A549 (cell line): ENCODE measurements at regions of chr19 and their contacts with region 1.

Region 1: GRCh38 chr19:42295831-42296525 is 6.0 kb upstream of the PRR19 start:
- DNase-seq: peak; percentile 86 to 93
- ATAC-seq: peak; percentile 72 to 84
- H3K4me3 ChIP-seq: no peak overlapping the region
- H3K27ac ChIP-seq: no peak overlapping the region
- H3K4me1 ChIP-seq: peaks cover 6% of the 10 kb centered on the region
- CTCF ChIP-seq: peak; percentile 98
- EP300 ChIP-seq: no peak
- POLR2A ChIP-seq: no peak
- RAD21 ChIP-seq: peak; percentile 83 to 88

Region 2: GRCh38 chr19:42121656-42122069 is 174.3 kb before region 1 on chr19:
- CTCF ChIA-PET with region 1: interaction called, 12 read pairs
- POLR2A ChIA-PET with region 1: no interaction called
- DNase-seq: peak in 1 of 2 experiments; percentile 66
- ATAC-seq: peak; percentile 10 to 37; a peak in 3 of 6 replicates
- H3K4me3 ChIP-seq: no peak overlapping the region
- H3K27ac ChIP-seq: peak overlapping the region in 1 of 2 experiments; percentile 56; a peak in 3 of 6 replicates
- H3K4me1 ChIP-seq: peaks cover 14% of the 10 kb centered on the region
- CTCF ChIP-seq: no peak
- EP300 ChIP-seq: no peak
- POLR2A ChIP-seq: no peak
- RAD21 ChIP-seq: no peak

Region 3: DNA sequence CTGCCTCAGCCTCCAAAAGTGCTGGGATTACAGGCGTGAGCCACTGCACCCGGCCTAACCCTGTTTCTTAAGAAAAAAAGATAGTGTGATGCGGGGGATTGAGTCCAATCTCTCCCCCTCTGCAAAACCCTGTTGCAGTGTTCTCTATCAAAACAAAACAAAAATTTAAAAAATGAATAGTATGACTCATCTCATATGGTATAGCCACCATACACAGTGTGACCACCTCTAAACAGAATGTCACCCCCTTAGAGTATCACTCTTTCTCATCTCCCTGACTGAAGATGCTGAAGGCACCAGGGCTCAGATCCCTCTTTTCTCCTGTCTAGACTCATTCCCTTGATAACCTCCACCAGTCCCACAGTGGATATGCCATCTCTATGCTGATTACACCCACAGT is 34.2 kb before region 1 on chr19:
- CTCF ChIA-PET with region 1: interaction called, 13 read pairs
- POLR2A ChIA-PET with region 1: no interaction called
- DNase-seq: no peak
- ATAC-seq: peak; percentile 30 to 41; a peak in 5 of 6 replicates
- H3K4me3 ChIP-seq: no peak overlapping the region
- H3K27ac ChIP-seq: no peak overlapping the region
- H3K4me1 ChIP-seq: peaks cover 12% of the 10 kb centered on the region
- CTCF ChIP-seq: no peak
- EP300 ChIP-seq: no peak
- POLR2A ChIP-seq: no peak
- RAD21 ChIP-seq: no peak

Region 4: DNA sequence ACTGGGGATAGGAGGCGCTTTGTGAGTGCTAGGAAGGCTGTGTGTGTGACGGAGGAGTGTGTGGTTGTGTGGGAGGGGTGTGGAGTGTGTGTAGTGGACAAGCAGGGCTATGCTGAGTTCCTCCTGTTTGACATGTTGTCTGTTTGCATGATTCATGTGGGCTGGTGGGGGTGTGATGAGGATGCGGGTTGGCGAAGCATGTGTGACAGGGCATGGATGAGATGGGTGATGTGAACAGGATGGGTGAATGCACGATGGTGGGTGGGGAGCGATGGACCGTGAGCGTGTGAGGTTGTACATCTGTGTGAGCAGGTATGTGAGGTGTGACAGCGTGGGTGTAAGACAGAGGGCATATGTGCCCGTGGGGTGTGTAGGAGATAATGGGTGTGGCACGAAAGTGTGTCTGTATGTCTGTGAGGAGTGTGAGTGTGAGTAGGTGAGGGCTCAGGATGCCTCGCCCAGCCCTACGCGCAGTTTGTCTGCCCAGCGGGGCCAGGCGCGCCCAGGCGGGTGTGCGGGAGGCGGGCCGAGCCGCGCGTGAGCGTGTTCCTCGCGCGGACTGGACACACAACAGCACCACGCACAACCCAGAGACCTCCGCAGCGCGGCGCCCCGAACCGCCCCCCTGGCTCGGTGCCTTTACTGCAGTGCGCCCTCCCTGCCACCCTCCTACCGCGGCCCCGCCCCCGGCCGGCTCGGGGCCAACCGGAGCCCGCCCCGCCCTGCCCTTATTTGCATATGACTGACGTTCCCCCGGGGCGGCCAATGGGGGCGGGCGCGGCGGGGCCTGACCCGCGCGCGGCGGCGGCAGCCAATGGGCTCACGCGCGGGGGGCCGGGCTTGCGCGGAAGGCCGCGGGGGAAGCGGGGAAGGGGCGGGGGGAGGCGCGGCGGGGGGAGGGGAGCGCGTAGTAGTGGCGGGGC is 12.6 kb before region 1 on chr19:
- CTCF ChIA-PET with region 1: interaction called, 224 read pairs
- POLR2A ChIA-PET with region 1: interaction called, 4 read pairs
- DNase-seq: peak; percentile 97 to 99
- ATAC-seq: peak; percentile 31 to 56
- H3K4me3 ChIP-seq: peak overlapping the region; percentile 76
- H3K27ac ChIP-seq: peak overlapping the region; percentile 94 to 98
- H3K4me1 ChIP-seq: peaks cover 61% of the 10 kb centered on the region
- CTCF ChIP-seq: 0 out of 3 replicates have a peak, but pooled peaks have one; percentile 5
- EP300 ChIP-seq: no peak
- POLR2A ChIP-seq: peak; percentile 35; the same call in 1 of the 2 replicates
- RAD21 ChIP-seq: no peak

Region 5: GRCh38 chr19:42325896-42326771 is 30.2 kb after region 1 on chr19:
- CTCF ChIA-PET with region 1: interaction called, 16 read pairs
- POLR2A ChIA-PET with region 1: no interaction called
- DNase-seq: peak in 1 of 2 experiments; percentile 59
- ATAC-seq: peak; percentile 46 to 64
- H3K4me3 ChIP-seq: peak overlapping the region; percentile 75
- H3K27ac ChIP-seq: peak overlapping the region; percentile 85 to 90
- H3K4me1 ChIP-seq: peaks cover 19% of the 10 kb centered on the region; the same call in 2 of the 3 replicates
- CTCF ChIP-seq: peak; percentile 43
- EP300 ChIP-seq: no peak
- POLR2A ChIP-seq: peak; percentile 7; the same call in 1 of the 2 replicates
- RAD21 ChIP-seq: no peak

Region 6: GRCh38 chr19:42407085-42407815 is 111.3 kb after region 1 on chr19:
- CTCF ChIA-PET with region 1: no interaction called
- POLR2A ChIA-PET with region 1: no interaction called
- DNase-seq: no peak
- ATAC-seq: no peak
- H3K4me3 ChIP-seq: no peak overlapping the region
- H3K27ac ChIP-seq: no peak overlapping the region
- H3K4me1 ChIP-seq: peaks cover 3% of the 10 kb centered on the region; the same call in 2 of the 3 replicates
- CTCF ChIP-seq: no peak
- EP300 ChIP-seq: no peak
- POLR2A ChIP-seq: no peak
- RAD21 ChIP-seq: no peak